Heart right ventricle (tissue), 16 donors: ENCODE measurements at regions of chr4 and their contacts with region 1.

Region 1: GRCh38 chr4:150867148-150867547 is 147.9 kb downstream of the LRBA start:
- DNase-seq: peak in 1 of 2 donors; percentile 59
- ATAC-seq: peak in 7 of 8 donors; percentile 55 to 82 (median 72)
- H3K4me3 ChIP-seq: no peak overlapping the region
- H3K27ac ChIP-seq: no peak overlapping the region
- H3K4me1 ChIP-seq: peaks cover 0 to 4% (median 0%) of the 10 kb centered on the region in 9 donors
- H3K27me3 ChIP-seq: no peaks in the 10 kb centered on the region
- CTCF ChIP-seq: peak; percentile 55 to 78 (median 69)

Region 2: DNA sequence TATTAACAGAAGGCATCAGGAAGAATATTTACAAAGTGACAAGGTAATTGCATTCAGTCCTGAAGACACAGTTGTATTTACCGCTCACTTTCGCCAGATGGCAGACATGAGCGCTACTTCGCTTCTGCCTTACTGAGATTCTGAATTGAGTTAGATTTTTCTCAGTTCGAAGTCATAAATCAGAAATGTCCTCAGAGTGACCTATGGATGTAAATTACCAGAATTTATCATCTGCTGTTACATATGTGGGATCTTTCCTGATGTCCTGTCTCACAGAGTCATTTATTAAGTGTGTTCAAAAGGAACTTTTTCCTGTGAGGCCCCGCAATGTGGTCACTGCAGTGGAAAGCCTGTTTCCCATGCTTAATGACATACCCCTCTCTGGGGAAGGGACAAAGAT is 886.2 kb before region 1 on chr4:
- intact Hi-C with region 1: loop called in 3 of 10 experiments (anchors 5 to 10 kb)
- DNase-seq: peak in 1 of 2 donors; percentile 61
- ATAC-seq: peak in 5 of 8 donors; percentile 44 to 70 (median 55)
- H3K4me3 ChIP-seq: no peak overlapping the region
- H3K27ac ChIP-seq: no peak overlapping the region
- H3K4me1 ChIP-seq: no peaks in the 10 kb centered on the region
- H3K27me3 ChIP-seq: no peaks in the 10 kb centered on the region
- CTCF ChIP-seq: peak; percentile 42 to 83 (median 78)

Region 3: DNA sequence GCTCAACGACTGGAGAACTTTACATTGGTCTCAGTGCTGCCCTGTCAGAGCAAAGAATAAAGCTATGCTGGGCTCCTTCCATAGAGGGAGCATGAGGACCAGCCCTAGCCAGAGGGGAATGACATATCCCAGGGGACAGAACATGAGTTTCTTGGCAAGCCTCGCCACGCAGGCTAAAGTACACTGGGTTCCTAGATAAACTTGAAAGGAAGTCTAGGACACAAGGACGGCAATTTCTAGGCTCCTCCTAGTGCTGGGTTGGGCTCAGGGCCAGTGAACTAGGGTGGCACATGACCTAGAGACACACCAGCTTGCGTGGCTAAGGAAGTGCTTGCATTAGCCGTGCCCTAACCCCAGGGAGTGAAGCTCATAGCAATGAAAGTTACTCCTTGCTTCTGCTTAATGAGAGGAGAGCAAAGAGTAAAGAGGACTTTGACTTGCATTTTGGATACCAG is 144.2 kb before region 1 on chr4:
- intact Hi-C with region 1: loop called in 5 of 10 experiments (anchors 5 to 10 kb)
- DNase-seq: peak; percentile 81 to 86
- ATAC-seq: peak; percentile 90 to 100 (median 99)
- H3K4me3 ChIP-seq: no peak overlapping the region
- H3K27ac ChIP-seq: peak overlapping the region in 9 of 10 donors; percentile 34 to 76 (median 56)
- H3K4me1 ChIP-seq: peaks cover 0 to 24% (median 15%) of the 10 kb centered on the region in 9 donors
- H3K27me3 ChIP-seq: no peaks in the 10 kb centered on the region
- CTCF ChIP-seq: peak in 8 of 9 donors; percentile 19 to 66 (median 52)